Left ventricle myocardium inferior (tissue), 1 donor: ENCODE measurements at regions of chrX and their contacts with region 1.

Region 1: GRCh38 chrX:153953342-153953830 is 8.9 kb upstream of the RENBP start:
- DNase-seq: peak; percentile 54
- H3K4me3 ChIP-seq: no peak overlapping the region
- H3K27ac ChIP-seq: peak overlapping the region; percentile 40
- H3K4me1 ChIP-seq: peaks cover 25% of the 10 kb centered on the region
- H3K27me3 ChIP-seq: no peaks in the 10 kb centered on the region
- CTCF ChIP-seq: peak; percentile 90

Region 2: GRCh38 chrX:153763989-153764755 is 189.2 kb before region 1 on chrX and contains the start of gene PLXNB3:
- intact Hi-C with region 1: loop called (anchors 5 kb)
- DNase-seq: peak; percentile 71
- H3K4me3 ChIP-seq: peak within 1 kb of the TSS; percentile 41
- H3K27ac ChIP-seq: peak within 1 kb of the TSS; percentile 56
- H3K4me1 ChIP-seq: peaks cover 22% of the 10 kb centered on the region
- H3K27me3 ChIP-seq: no peaks in the 10 kb centered on the region
- CTCF ChIP-seq: peak; percentile 83
- total RNA-seq, gene PLXNB3: 2.9 TPM

Region 3: DNA sequence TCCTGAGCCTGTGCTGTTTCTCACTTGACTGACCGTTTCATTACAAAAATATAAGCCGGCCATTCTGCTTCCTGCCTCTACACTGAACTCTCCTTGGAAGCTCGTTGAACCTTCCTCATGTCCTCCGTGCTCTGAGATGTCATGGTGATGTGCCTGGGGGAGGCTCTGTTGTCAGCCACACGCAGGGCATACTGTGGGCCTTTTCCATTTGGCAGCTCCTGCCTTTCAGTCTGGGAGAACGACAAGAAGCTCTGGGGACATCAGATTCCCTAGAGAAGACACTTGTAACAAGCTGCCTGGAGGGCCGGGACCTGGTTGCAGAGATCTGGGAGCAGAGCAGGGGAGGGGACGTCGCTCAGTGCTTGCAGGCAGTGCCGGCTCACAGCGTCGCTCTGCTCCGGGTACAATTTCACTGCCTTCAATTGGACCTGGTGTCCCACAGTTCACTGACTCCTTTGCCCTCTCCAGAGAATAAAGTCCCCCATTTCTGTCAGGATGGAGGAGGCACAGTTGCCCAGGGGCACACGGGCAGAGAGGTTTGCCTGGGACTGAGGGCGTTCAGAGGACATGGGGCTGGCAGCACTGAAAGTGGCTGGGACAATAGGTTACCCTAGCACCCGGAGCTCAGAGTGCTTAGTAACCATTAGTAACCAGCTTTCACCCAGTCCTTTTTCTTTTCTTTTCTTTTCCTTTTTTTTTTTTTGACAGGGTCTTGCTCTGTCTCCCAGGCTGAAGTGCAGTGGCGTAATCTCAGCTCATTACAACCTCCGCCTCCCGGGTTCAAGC is 163.2 kb after region 1 on chrX:
- intact Hi-C with region 1: no loop called
- DNase-seq: no peak
- H3K4me3 ChIP-seq: no peak overlapping the region
- H3K27ac ChIP-seq: no peak overlapping the region
- H3K4me1 ChIP-seq: no peaks in the 10 kb centered on the region
- H3K27me3 ChIP-seq: no peaks in the 10 kb centered on the region
- CTCF ChIP-seq: no peak